Activated CD8-positive, alpha-beta T cell treated with anti-CD3 and anti-CD28 coated beads for 36 hours (primary cell): ENCODE measurements at regions of chr5 and their contacts with region 1.

Region 1: DNA sequence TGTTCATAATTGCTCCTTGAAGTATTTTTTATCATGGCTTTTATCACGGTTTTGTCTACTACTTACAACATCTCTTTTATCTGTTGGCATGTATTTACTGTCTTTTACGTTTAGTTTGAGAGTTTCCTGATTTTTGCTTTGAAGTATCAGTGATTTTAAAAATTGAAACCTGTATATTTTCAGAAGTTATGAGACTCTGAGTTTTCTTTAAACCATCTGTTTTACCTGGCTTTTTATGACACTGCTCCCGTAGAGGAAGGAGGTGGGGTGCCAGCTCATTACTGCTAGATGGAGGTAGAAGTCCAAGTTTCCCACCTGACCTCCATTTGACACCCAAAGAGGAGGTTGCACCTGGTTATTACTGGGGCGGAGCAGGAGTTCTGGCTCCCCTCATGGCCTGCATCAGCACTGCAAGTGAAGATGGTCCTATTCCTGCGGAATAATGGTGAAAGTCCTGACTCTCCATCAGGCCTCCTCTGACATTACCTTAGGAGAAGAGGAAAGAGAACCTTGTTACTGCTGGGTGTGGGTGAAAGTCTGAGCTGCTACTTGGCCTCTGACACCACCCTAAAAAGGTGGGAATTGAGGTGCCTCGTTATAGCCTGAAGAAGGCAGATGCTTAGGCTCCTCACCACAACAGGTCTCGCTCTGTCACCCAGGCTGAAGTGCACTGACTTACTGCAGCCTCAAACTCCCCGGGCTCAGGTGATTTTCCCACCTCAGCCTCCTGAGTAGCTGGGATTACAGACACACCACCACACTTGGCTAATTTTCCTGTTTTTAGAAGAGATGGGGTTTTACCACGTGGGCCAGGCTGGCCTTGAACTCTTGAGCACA is 9.9 kb upstream of the ZNF131 start:
- DNase-seq: peak; percentile 51
- ATAC-seq: peak; percentile 60
- H3K4me3 Mint-ChIP-seq: no peak overlapping the region
- H3K27ac Mint-ChIP-seq: peak overlapping the region; percentile 63
- H3K4me1 Mint-ChIP-seq: peaks cover 32% of the 10 kb centered on the region
- H3K27me3 Mint-ChIP-seq: no peaks in the 10 kb centered on the region
- CTCF ChIP-seq: peak; percentile 46

Region 2: GRCh38 chr5:42985129-42986037 is 125.4 kb before region 1 on chr5:
- CTCF ChIA-PET with region 1: no interaction called
- POLR2A ChIA-PET with region 1: no interaction called
- intact Hi-C with region 1: no loop called
- DNase-seq: no peak
- ATAC-seq: no peak
- H3K4me3 Mint-ChIP-seq: no peak overlapping the region
- H3K27ac Mint-ChIP-seq: no peak overlapping the region
- H3K4me1 Mint-ChIP-seq: peaks cover 49% of the 10 kb centered on the region
- H3K27me3 Mint-ChIP-seq: no peaks in the 10 kb centered on the region
- CTCF ChIP-seq: no peak

Region 3: DNA sequence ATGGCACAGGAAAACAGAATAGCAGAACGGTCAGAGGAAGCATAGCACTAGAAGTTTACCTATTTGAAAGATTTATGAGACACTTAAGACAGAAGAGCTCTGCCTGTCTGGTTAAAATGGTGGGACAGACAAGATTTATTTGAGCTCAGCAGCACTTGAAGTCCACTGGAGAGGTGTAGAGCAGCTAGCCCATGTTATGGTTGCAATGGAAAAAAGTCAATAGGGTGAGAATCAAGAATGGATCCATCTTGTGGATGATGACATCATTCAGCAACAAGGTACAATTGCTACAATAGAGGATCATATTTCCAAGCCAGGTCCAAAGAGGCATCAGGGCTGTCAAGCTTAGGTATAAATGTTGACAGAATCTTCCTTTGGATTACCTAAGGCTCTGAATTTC is 11.2 kb before region 1 on chr5:
- CTCF ChIA-PET with region 1: interaction called, 14 read pairs
- POLR2A ChIA-PET with region 1: no interaction called
- intact Hi-C with region 1: no loop called
- DNase-seq: no peak
- ATAC-seq: no peak
- H3K4me3 Mint-ChIP-seq: no peak overlapping the region
- H3K27ac Mint-ChIP-seq: no peak overlapping the region
- H3K4me1 Mint-ChIP-seq: peaks cover 16% of the 10 kb centered on the region
- H3K27me3 Mint-ChIP-seq: no peaks in the 10 kb centered on the region
- CTCF ChIP-seq: no peak

Region 4: GRCh38 chr5:43171914-43172313 is 61.1 kb after region 1 on chr5:
- CTCF ChIA-PET with region 1: no interaction called
- POLR2A ChIA-PET with region 1: no interaction called
- intact Hi-C with region 1: no loop called
- DNase-seq: no peak
- ATAC-seq: no peak
- H3K4me3 Mint-ChIP-seq: no peak overlapping the region
- H3K27ac Mint-ChIP-seq: peak overlapping the region; percentile 52
- H3K4me1 Mint-ChIP-seq: peaks cover 2% of the 10 kb centered on the region
- H3K27me3 Mint-ChIP-seq: no peaks in the 10 kb centered on the region
- CTCF ChIP-seq: no peak